H1 (cell line): ENCODE measurements at regions of chr4 and their contacts with region 1.

Region 1: GRCh38 chr4:88533937-88534750 is 10.6 kb upstream of the PYURF start:
- DNase-seq: no peak
- H3K4me3 ChIP-seq: peak overlapping the region in 1 of 4 experiments; percentile 35; a peak in 2 of 8 replicates
- H3K27ac ChIP-seq: no peak overlapping the region
- H3K4me1 ChIP-seq: peaks cover 0 to 14% (median 4%) of the 10 kb centered on the region in 4 experiments; a peak in 4 of 7 replicates
- H3K27me3 ChIP-seq: no peaks in the 10 kb centered on the region
- CTCF ChIP-seq: no peak
- EP300 ChIP-seq: no peak
- POLR2A ChIP-seq: no peak
- RAD21 ChIP-seq: no peak

Region 2: GRCh38 chr4:88352062-88352740 is 181.9 kb before region 1 on chr4:
- CTCF ChIA-PET with region 1: no interaction called
- POLR2A ChIA-PET with region 1: no interaction called
- DNase-seq: peak in 1 of 2 experiments; percentile 8
- H3K4me3 ChIP-seq: no peak overlapping the region
- H3K27ac ChIP-seq: no peak overlapping the region
- H3K4me1 ChIP-seq: no peaks in the 10 kb centered on the region; a peak in 1 of 7 replicates
- H3K27me3 ChIP-seq: no peaks in the 10 kb centered on the region
- CTCF ChIP-seq: no peak
- EP300 ChIP-seq: no peak
- POLR2A ChIP-seq: no peak
- RAD21 ChIP-seq: no peak

Region 3: DNA sequence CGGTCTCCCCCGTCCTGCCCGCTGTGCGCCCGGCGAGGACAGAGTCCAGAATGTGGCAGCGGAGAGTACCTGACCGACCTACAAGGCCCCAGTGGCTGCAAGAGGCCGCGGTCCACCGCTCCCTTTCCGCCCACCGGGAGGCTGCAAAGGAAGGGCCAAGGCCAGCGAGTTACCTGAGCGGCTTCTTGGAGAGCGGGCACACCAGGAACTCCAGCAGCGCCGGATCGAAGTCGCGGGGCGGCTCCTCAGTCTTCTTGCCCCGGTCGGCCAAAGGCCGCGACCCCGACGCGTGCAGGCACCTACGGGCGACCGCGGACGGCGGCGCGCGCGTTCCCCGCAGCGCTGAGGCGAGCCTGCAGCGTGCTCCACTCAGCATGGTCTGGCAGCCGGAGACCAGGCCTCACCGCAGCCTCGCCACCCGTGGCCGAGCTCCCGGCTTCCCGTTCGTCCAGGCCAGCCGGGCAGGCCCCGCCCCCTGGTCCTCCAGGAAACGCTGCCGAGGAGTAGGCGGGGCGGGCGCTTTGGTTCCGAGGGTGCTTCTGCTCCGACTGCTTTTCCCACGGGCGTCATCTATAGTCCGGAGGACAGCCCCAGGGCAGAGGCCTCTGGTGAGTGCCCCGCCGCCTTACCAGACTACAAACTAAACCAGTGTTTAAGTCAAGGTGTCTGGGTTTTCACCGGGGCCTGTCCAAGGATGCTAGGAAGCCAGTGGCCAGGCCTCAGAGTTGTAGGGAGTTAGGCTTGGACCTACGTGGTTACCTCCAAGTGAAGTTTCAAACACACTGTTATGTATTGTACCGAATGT is 10.6 kb before region 1 on chr4 and contains the start of gene PYURF:
- CTCF ChIA-PET with region 1: interaction called, 15 read pairs
- POLR2A ChIA-PET with region 1: interaction called, 17 read pairs
- DNase-seq: peak; percentile 73 to 95
- H3K4me3 ChIP-seq: peak within 1 kb of the TSS; percentile 74 to 88 (median 79)
- H3K27ac ChIP-seq: peak within 1 kb of the TSS; percentile 39; the same call in 1 of the 2 replicates
- H3K4me1 ChIP-seq: peaks cover 3 to 6% (median 4%) of the 10 kb centered on the region in 4 experiments; a peak in 6 of 7 replicates
- H3K27me3 ChIP-seq: no peaks in the 10 kb centered on the region
- CTCF ChIP-seq: no peak
- EP300 ChIP-seq: no peak
- POLR2A ChIP-seq: peak; percentile 67 to 88
- RAD21 ChIP-seq: no peak
- total RNA-seq, gene PYURF: 44.8 and 45.2 TPM in 2 replicates

Region 4: GRCh38 chr4:88573995-88574394 is 39.9 kb after region 1 on chr4:
- CTCF ChIA-PET with region 1: interaction called, 12 read pairs
- POLR2A ChIA-PET with region 1: no interaction called
- DNase-seq: no peak
- H3K4me3 ChIP-seq: no peak overlapping the region
- H3K27ac ChIP-seq: no peak overlapping the region
- H3K4me1 ChIP-seq: peaks cover 0 to 3% (median 1%) of the 10 kb centered on the region in 4 experiments; a peak in 1 of 7 replicates
- H3K27me3 ChIP-seq: no peaks in the 10 kb centered on the region
- CTCF ChIP-seq: peak in 2 of 3 experiments; percentile 59 to 62; a peak in 3 of 4 replicates
- EP300 ChIP-seq: no peak
- POLR2A ChIP-seq: no peak
- RAD21 ChIP-seq: peak; percentile 21 to 26; a peak in 2 of 4 replicates

Region 5: DNA sequence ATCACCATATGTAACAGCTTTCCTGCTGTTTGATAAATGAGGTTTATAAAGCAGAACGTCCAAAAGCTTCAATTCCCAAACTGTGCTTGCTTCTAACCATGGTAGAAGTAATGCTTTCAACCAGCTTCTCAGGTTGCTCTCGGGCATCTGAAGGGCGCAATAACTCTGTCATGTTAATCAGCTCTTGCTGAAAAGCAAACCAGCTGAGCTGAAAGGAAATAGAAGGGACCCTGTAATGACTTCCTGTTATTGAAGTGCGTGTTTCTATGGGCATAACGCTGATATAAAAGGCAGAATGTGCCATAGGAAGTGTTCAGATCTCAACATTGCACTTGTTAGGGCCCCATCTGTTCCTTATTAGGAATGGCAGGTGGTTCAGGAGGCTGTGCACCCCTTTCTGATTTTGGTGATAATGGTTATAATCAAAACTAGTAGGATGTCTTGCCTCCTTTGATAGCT is 79.3 kb after region 1 on chr4:
- CTCF ChIA-PET with region 1: interaction called, 13 read pairs
- POLR2A ChIA-PET with region 1: no interaction called
- DNase-seq: no peak
- H3K4me3 ChIP-seq: no peak overlapping the region
- H3K27ac ChIP-seq: no peak overlapping the region
- H3K4me1 ChIP-seq: peaks cover 0 to 4% (median 3%) of the 10 kb centered on the region in 4 experiments; a peak in 6 of 7 replicates
- H3K27me3 ChIP-seq: no peaks in the 10 kb centered on the region
- CTCF ChIP-seq: no peak
- EP300 ChIP-seq: no peak
- POLR2A ChIP-seq: no peak
- RAD21 ChIP-seq: no peak

Region 6: DNA sequence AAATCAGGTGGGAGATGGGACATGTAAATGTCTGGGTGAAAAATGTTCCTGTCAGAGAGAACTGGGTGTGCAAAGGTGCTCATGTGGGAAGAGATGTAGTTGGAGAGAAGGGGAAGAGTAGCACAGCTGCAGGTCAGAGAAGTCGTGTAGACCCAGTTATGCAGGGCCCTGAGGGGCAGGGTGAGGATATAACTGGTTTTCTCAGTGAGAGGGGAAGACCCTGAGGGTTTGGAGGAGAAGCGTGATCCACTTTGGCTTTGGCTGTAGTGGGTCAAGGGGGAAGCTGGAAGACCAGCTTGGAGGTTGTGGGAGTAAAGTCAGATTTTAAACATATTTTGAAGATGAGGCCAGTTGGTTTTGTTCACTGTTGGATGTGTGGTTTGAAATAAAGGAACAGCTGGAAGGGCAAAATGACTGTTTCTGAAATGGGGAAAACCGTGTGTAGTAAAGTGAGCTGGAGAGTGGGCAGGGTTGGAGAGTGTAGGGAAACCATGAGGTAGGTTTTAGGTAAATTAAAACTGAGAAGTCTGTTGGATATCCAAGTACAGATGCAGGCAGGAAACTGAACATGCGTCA is 119.3 kb after region 1 on chr4:
- CTCF ChIA-PET with region 1: interaction called, 10 read pairs
- POLR2A ChIA-PET with region 1: no interaction called
- DNase-seq: no peak
- H3K4me3 ChIP-seq: no peak overlapping the region
- H3K27ac ChIP-seq: no peak overlapping the region
- H3K4me1 ChIP-seq: no peaks in the 10 kb centered on the region; a peak in 2 of 7 replicates
- H3K27me3 ChIP-seq: no peaks in the 10 kb centered on the region
- CTCF ChIP-seq: no peak
- EP300 ChIP-seq: no peak
- POLR2A ChIP-seq: no peak
- RAD21 ChIP-seq: no peak

Region 7: GRCh38 chr4:88659055-88659889 is 125.1 kb after region 1 on chr4:
- CTCF ChIA-PET with region 1: interaction called, 29 read pairs
- POLR2A ChIA-PET with region 1: no interaction called
- DNase-seq: no peak
- H3K4me3 ChIP-seq: no peak overlapping the region
- H3K27ac ChIP-seq: 0 out of 2 replicates have a peak overlapping the region, but pooled peaks have one; percentile 1
- H3K4me1 ChIP-seq: no peaks in the 10 kb centered on the region; a peak in 1 of 7 replicates
- H3K27me3 ChIP-seq: no peaks in the 10 kb centered on the region
- CTCF ChIP-seq: peak; percentile 38 to 85 (median 84)
- EP300 ChIP-seq: no peak
- POLR2A ChIP-seq: no peak
- RAD21 ChIP-seq: peak; percentile 91 to 95